ENCODE measurements at regions of chr7 and their contacts with region 1.

Region 1: GRCh38 chr7:2214636-2215035 is 18.1 kb downstream of the MAD1L1 start:
- DNase-seq: no peak
- H3K4me3 ChIP-seq: no peak overlapping the region
- H3K27ac ChIP-seq: no peak overlapping the region
- H3K4me1 ChIP-seq: no peaks in the 10 kb centered on the region
- H3K27me3 ChIP-seq: no peaks in the 10 kb centered on the region
- CTCF ChIP-seq: no peak
- EP300 ChIP-seq: no peak
- POLR2A ChIP-seq: no peak

Region 2: GRCh38 chr7:1579481-1580421 is 634.9 kb before region 1 on chr7:
- intact Hi-C with region 1: loop called in 3 of 4 experiments (anchors 5 to 10 kb)
- DNase-seq: peak; percentile 58 to 82 (median 80)
- H3K4me3 ChIP-seq: no peak overlapping the region
- H3K27ac ChIP-seq: no peak overlapping the region
- H3K4me1 ChIP-seq: no peaks in the 10 kb centered on the region
- H3K27me3 ChIP-seq: no peaks in the 10 kb centered on the region
- CTCF ChIP-seq: peak; percentile 52 to 72 (median 64)
- EP300 ChIP-seq: no peak
- POLR2A ChIP-seq: no peak

Region 3: GRCh38 chr7:1664711-1665548 is 549.7 kb before region 1 on chr7:
- intact Hi-C with region 1: loop called (anchors 5 kb)
- DNase-seq: peak; percentile 34 to 82 (median 68)
- H3K4me3 ChIP-seq: peak overlapping the region; percentile 35
- H3K27ac ChIP-seq: no peak overlapping the region
- H3K4me1 ChIP-seq: peaks cover 5% of the 10 kb centered on the region
- H3K27me3 ChIP-seq: peaks cover 10% of the 10 kb centered on the region
- CTCF ChIP-seq: peak; percentile 20 to 56 (median 54)
- EP300 ChIP-seq: no peak
- POLR2A ChIP-seq: no peak

Region 4: GRCh38 chr7:1800902-1801301 is 413.7 kb before region 1 on chr7:
- intact Hi-C with region 1: loop called in 1 of 4 experiments (anchors 10 kb)
- DNase-seq: peak in 1 of 5 donors; percentile 11
- H3K4me3 ChIP-seq: no peak overlapping the region
- H3K27ac ChIP-seq: no peak overlapping the region
- H3K4me1 ChIP-seq: no peaks in the 10 kb centered on the region
- H3K27me3 ChIP-seq: no peaks in the 10 kb centered on the region
- CTCF ChIP-seq: no peak
- EP300 ChIP-seq: no peak
- POLR2A ChIP-seq: no peak

Region 5: DNA sequence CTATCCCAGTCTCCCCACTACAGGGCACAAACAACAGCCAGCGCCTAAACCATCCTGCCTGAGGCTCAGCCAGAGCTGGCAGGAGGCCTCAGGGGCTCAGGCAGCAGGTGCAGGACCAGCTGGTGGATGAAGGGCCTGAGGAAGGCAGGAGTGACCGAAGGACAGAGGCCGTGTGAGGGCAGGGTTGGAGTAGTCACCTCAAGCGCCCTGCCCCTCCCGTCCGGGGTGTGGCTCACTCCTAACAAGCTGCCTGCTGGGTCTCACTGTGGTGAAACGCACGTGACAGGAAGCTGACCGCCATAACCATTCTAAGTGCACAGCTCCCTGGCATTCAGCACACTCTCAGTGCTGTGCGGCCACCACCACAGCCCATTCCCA is 263.5 kb before region 1 on chr7:
- intact Hi-C with region 1: no loop called
- DNase-seq: peak in 1 of 5 donors; percentile 14
- H3K4me3 ChIP-seq: no peak overlapping the region
- H3K27ac ChIP-seq: no peak overlapping the region
- H3K4me1 ChIP-seq: peaks cover 3% of the 10 kb centered on the region
- H3K27me3 ChIP-seq: no peaks in the 10 kb centered on the region
- CTCF ChIP-seq: no peak
- EP300 ChIP-seq: no peak
- POLR2A ChIP-seq: no peak

Region 6: DNA sequence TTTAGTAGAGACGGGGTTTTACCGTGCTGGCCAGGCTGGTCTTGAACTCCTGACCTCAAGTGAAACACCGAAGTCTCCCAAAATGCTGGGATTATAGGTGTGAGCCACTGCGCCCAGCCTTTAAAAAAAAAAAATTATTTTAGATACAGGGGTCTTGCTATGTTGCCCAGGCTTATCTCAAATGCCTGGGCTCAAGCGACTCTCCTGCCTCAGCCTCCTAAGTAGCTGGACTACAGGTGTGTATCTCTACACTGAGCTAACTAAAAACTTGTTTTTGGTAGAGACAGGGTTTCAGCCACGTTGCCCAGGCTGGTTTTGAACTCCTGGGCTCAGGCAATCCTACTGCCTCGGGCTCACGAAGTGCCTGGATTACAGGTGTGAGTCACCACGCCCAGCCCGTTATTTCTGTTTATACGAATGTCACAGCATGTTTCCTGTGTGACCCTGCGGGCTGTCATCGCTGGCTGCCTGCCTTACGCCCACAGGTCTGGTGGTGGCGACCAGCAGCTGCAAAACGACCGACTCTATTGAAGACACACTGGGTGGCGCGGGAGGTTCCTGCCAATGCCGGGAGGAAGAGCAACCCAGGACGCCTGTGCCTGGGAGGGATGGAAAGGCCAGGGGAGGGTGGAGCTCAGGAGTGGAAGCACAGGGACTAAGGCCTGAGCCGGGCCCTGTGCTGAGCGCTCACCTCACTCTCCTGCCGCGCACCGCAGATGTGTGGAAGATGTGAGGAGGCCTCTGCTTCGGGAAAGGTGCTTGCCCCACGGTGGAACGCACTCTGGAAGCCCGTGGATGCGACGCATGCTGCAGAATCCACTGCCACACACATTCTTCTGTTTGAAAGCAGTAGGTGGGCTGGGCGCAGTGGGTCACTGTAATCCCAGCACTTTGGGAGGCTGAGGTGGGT is 506.2 kb after region 1 on chr7:
- intact Hi-C with region 1: no loop called
- DNase-seq: peak in 1 of 5 donors; percentile 37
- H3K4me3 ChIP-seq: no peak overlapping the region
- H3K27ac ChIP-seq: no peak overlapping the region
- H3K4me1 ChIP-seq: peaks cover 12% of the 10 kb centered on the region
- H3K27me3 ChIP-seq: no peaks in the 10 kb centered on the region
- CTCF ChIP-seq: no peak
- EP300 ChIP-seq: no peak
- POLR2A ChIP-seq: no peak

Region 7: DNA sequence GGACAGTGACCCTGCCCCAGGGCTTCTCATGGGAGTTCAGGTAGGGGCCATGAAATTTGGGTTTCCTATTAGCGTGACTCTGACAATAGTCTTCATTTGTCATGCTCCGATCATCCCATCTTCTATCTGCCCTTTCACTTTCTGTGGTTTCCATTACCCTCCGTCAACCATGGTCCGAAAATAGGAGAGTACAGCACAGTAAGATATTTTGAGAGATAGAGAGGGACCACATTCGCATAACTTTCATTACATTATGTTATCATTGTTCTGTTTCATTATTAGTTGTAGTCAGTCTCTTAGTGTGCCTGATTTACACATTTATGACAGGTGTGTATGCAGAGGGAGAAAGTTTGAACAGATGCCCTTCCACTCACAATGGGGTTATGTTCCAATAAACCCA is 1735.6 kb after region 1 on chr7:
- intact Hi-C with region 1: no loop called
- DNase-seq: no peak
- H3K4me3 ChIP-seq: no peak overlapping the region
- H3K27ac ChIP-seq: no peak overlapping the region
- H3K4me1 ChIP-seq: no peaks in the 10 kb centered on the region
- H3K27me3 ChIP-seq: no peaks in the 10 kb centered on the region
- CTCF ChIP-seq: no peak
- EP300 ChIP-seq: no peak
- POLR2A ChIP-seq: no peak

Measured in ovary (tissue), 10 donors.